HCT116 (cell line): ENCODE measurements at regions of chrX and their contacts with region 1.

Region 1: DNA sequence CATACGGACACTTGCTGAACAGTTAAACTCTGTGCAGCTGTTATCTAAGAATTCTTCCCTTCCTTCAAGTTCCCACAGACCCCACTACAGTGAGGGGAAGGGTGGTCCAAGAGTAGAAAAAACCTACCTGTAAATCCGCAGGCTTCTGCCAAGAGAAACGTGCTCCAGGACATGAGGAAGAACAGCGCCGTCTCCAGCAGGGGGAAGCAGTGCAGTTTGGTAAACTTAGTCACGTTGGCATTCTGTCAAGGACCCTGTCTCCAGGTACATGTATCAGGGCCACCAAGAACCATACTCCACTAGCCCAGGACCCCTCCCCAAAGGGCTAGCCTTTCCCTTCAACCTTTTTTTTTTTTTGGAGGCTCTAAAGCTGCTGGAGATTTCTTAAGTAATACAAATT is 79.9 kb downstream of the CHST7 start:
- DNase-seq: no peak
- ATAC-seq: peak; percentile 73
- H3K4me3 ChIP-seq: no peak overlapping the region
- H3K27ac ChIP-seq: no peak overlapping the region
- H3K4me1 ChIP-seq: peaks cover 0 to 14% of the 10 kb centered on the region in 2 experiments; a peak in 3 of 4 replicates
- H3K27me3 ChIP-seq: no peaks in the 10 kb centered on the region
- CTCF ChIP-seq: peak; percentile 34 to 50 (median 39); a peak in 5 of 6 replicates
- POLR2A ChIP-seq: no peak
- RAD21 ChIP-seq: peak; percentile 62; the same call in 1 of the 2 replicates

Region 2: DNA sequence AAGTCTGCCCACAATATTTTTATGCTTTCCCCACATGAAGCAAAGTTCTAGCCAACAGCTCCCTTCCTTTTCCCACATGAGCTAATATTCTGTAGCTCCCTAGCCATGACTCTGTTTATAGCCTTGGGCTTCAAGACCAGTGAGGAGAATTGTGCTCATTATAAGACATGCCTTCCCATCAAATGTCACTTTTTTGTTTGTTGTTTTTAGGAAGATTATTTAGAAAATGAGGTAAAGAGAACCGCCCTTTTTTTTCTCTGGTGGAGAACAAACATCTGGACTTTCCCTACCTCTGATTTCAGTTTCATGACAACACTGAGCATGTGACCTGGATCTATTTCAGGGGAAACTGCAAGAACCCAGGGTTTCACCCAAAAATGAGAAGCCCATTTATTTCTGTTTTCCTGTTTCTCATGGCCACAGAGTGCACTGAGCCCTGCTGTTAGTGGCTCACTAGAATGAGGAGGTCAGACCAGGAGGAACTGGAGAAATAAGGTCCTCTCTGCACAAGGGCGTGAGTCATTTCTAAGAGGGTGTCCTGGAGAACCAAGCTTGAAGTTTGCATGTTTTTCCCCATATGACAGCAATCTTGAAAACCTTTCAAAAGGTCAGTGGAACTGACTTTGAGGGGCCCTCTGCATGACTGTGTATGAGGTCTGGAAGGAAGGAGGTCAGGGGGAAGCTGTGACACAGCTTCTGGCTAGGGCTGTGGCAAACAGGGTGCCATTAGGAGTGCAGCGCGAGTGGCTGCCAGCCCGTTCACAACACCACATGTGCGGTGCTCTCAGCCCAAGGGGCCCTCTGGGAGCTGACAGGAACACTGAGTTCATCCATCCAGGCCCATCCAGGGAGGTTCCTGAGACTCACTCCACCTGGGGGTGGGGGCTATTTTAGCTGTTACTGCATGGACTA is 24.8 kb before region 1 on chrX:
- CTCF ChIA-PET with region 1: no interaction called
- POLR2A ChIA-PET with region 1: no interaction called
- RAD21 ChIA-PET with region 1: no interaction called
- intact Hi-C with region 1: no loop called
- DNase-seq: no peak
- ATAC-seq: no peak
- H3K4me3 ChIP-seq: no peak overlapping the region
- H3K27ac ChIP-seq: no peak overlapping the region
- H3K4me1 ChIP-seq: 0 out of 4 replicates have a peak, but pooled peaks cover 0 to 8% of the 10 kb centered on the region in 2 experiments
- H3K27me3 ChIP-seq: no peaks in the 10 kb centered on the region
- CTCF ChIP-seq: no peak
- POLR2A ChIP-seq: no peak
- RAD21 ChIP-seq: no peak

Region 3: DNA sequence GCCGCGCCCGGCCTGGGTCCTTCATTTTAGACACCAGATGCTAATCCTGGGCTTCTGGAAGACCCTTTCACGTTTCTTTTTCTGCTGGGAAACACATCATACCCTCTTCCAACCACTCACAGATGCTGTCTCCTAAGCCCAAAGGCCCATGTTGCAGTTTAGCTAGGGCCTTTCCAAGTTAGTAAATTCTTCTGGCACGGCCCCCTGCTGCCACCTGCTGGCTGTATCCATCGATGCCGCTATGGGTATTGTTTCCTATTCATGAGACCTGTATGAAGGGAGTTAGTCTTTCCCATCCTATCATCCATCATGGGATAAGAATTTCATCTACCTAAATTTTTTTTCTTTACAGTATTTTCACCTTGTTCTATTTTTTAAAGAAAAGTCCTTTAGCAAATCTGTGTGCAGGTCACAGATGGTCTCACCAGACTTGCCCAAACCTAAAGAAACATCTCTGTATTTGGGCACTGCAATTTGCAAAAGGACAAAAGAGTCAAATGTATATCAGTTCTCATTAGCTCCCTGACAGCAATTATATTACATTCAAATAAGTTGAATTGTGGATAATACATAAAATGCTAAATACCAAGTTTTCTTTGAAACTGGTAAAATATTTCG is 143.2 kb after region 1 on chrX:
- CTCF ChIA-PET with region 1: interaction called, 8 read pairs
- POLR2A ChIA-PET with region 1: no interaction called
- RAD21 ChIA-PET with region 1: no interaction called
- intact Hi-C with region 1: loop called (anchors 5 kb)
- DNase-seq: peak; percentile 36
- ATAC-seq: peak; percentile 79
- H3K4me3 ChIP-seq: no peak overlapping the region
- H3K27ac ChIP-seq: no peak overlapping the region
- H3K4me1 ChIP-seq: peaks cover under 1 to 26% of the 10 kb centered on the region in 2 experiments; a peak in 3 of 4 replicates
- H3K27me3 ChIP-seq: no peaks in the 10 kb centered on the region
- CTCF ChIP-seq: peak; percentile 70 to 77 (median 73); a peak in 5 of 6 replicates
- POLR2A ChIP-seq: no peak
- RAD21 ChIP-seq: peak; percentile 91